MCF 10A (cell line): ENCODE measurements at regions of chr12 and their contacts with region 1.

Region 1: DNA sequence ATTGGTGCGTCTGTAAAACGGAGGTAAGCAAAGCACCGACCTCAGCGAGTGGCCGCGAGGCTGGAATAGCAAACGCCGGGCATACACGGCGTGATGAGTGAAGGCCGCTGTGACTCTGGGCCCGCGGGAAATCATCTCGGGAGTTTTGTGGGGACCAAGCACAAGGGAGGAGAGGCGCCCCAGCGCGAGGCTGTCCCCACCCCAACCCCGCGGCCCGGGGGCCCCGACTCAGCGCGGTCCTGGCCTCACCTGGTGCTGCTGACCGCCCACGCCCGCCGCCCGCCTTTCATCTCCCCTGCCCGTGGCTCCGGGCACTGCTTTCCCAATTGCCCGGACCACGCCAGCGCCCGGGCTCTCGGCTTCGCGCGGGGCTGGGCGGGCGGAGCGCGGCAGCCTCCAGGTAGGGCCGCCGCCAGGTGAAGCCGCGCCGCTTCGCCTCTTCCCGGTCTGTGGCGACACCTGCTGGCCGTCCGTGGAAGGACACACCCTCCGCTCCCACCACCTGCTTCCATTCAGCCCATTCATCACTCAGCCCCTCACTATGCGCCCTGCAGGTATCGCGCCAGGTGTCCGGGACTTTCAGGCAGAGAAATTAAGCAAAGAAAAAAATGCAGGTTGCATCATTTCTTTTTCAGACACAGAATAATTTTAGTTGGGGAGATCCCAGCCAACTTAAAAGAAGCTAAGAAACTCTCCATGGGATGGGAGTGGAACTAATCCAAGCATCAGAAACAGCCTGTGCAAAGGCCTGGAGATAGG is 360.4 kb downstream of the MED13L start:
- DNase-seq: peak; percentile 50
- H3K4me3 Mint-ChIP-seq: no peak overlapping the region
- H3K27ac Mint-ChIP-seq: no peak overlapping the region
- H3K4me1 Mint-ChIP-seq: no peaks in the 10 kb centered on the region
- H3K27me3 Mint-ChIP-seq: peaks cover 38% of the 10 kb centered on the region
- CTCF ChIP-seq: peak; percentile 91

Region 2: GRCh38 chr12:114508529-114509129 is 1408.5 kb before region 1 on chr12:
- CTCF ChIA-PET with region 1: interaction called, 4 read pairs
- POLR2A ChIA-PET with region 1: no interaction called
- intact Hi-C with region 1: loop called (anchors 5 kb)
- DNase-seq: peak; percentile 73
- H3K4me3 Mint-ChIP-seq: no peak overlapping the region
- H3K27ac Mint-ChIP-seq: no peak overlapping the region
- H3K4me1 Mint-ChIP-seq: no peaks in the 10 kb centered on the region
- H3K27me3 Mint-ChIP-seq: peaks cover 60% of the 10 kb centered on the region
- CTCF ChIP-seq: peak; percentile 61

Region 3: GRCh38 chr12:114662512-114663177 is 1254.4 kb before region 1 on chr12:
- CTCF ChIA-PET with region 1: interaction called, 16 read pairs
- POLR2A ChIA-PET with region 1: no interaction called
- intact Hi-C with region 1: loop called (anchors 1 kb)
- DNase-seq: peak; percentile 86
- H3K4me3 Mint-ChIP-seq: no peak overlapping the region
- H3K27ac Mint-ChIP-seq: no peak overlapping the region
- H3K4me1 Mint-ChIP-seq: peaks cover 6% of the 10 kb centered on the region
- H3K27me3 Mint-ChIP-seq: no peaks in the 10 kb centered on the region
- CTCF ChIP-seq: peak; percentile 92

Region 4: GRCh38 chr12:115632308-115632707 is 284.8 kb before region 1 on chr12:
- CTCF ChIA-PET with region 1: interaction called, 5 read pairs
- POLR2A ChIA-PET with region 1: no interaction called
- intact Hi-C with region 1: loop called (anchors 5 kb)
- DNase-seq: peak; percentile 38
- H3K4me3 Mint-ChIP-seq: no peak overlapping the region
- H3K27ac Mint-ChIP-seq: no peak overlapping the region
- H3K4me1 Mint-ChIP-seq: peaks cover 10% of the 10 kb centered on the region
- H3K27me3 Mint-ChIP-seq: no peaks in the 10 kb centered on the region
- CTCF ChIP-seq: peak; percentile 46

Region 5: DNA sequence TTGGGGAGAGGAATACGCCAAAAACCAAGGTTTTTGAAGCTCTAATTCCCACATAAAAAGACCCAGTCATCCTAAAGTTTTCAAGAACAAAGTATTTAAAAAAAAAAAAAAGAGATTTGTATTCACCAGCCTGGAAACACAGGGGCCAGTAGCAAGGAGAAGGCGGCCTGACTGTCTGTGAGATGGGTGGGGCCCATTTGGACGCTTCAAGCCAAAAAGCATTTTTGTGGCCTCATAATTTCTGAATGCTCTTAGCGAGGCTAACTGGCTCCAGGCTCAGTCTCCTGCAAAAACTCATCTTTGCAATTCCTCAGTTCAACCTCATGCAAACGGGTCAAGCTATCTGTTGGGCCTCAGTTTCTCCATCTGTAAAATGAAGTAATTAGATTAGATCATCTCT is 153.7 kb before region 1 on chr12:
- CTCF ChIA-PET with region 1: interaction called, 10 read pairs
- POLR2A ChIA-PET with region 1: interaction called, 3 read pairs
- intact Hi-C with region 1: no loop called
- DNase-seq: no peak
- H3K4me3 Mint-ChIP-seq: no peak overlapping the region
- H3K27ac Mint-ChIP-seq: no peak overlapping the region
- H3K4me1 Mint-ChIP-seq: peaks cover 10% of the 10 kb centered on the region
- H3K27me3 Mint-ChIP-seq: peaks cover 42% of the 10 kb centered on the region
- CTCF ChIP-seq: no peak

Region 6: DNA sequence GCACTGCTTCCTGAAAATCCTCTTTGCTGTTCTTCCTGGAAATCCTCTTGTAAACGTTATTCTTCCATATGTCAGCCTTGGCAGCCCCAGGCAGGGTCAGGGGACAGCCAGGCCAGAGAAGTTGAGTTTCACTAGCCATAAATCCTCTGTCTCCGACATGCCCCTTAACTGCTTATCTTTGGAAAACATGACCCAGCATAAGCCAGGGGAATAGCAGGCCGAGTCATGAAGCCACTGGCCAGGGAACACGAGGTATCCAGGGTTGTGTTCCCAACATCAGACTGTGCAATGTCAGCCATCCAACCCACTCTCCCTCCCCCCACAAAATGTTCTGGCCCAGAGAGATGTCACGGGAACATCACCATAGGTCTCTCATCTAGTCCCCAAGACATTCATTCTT is 93.5 kb before region 1 on chr12:
- CTCF ChIA-PET with region 1: no interaction called
- POLR2A ChIA-PET with region 1: no interaction called
- intact Hi-C with region 1: no loop called
- DNase-seq: no peak
- H3K4me3 Mint-ChIP-seq: no peak overlapping the region
- H3K27ac Mint-ChIP-seq: no peak overlapping the region
- H3K4me1 Mint-ChIP-seq: no peaks in the 10 kb centered on the region
- H3K27me3 Mint-ChIP-seq: peaks cover 22% of the 10 kb centered on the region
- CTCF ChIP-seq: no peak

Region 7: DNA sequence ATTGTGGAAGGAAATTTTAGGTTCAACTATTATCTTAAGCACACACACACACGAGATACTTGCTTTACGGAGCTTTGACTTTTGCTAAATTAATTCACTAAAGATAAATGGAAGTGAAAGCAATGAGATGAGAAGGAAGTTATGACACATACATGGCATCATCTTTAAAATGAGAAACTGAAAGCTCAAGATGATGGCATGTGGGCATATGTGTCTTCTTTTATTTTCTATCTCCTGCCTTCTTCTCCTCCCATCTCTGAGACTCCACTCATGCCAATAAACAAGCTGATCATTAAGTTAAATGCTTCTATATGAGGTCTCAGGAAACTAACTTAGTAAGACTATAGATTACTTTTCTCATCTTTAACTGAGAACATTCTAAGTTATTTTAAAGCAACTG is 143.7 kb after region 1 on chr12:
- CTCF ChIA-PET with region 1: no interaction called
- POLR2A ChIA-PET with region 1: no interaction called
- intact Hi-C with region 1: no loop called
- DNase-seq: no peak
- H3K4me3 Mint-ChIP-seq: no peak overlapping the region
- H3K27ac Mint-ChIP-seq: no peak overlapping the region
- H3K4me1 Mint-ChIP-seq: peaks cover 9% of the 10 kb centered on the region
- H3K27me3 Mint-ChIP-seq: no peaks in the 10 kb centered on the region
- CTCF ChIP-seq: no peak